Panc1 (cell line): ENCODE measurements at regions of chr1 and their contacts with region 1.

Region 1: GRCh38 chr1:152654110-152654509 is 9.1 kb upstream of the LCE2D start:
- DNase-seq: peak; percentile 35
- ATAC-seq: peak; percentile 93
- H3K4me3 ChIP-seq: no peak overlapping the region
- H3K27ac ChIP-seq: no peak overlapping the region
- H3K4me1 ChIP-seq: no peaks in the 10 kb centered on the region
- H3K27me3 ChIP-seq: peaks cover 5% of the 10 kb centered on the region
- CTCF ChIP-seq: peak; percentile 92

Region 2: GRCh38 chr1:152718238-152718637 is 64.1 kb after region 1 on chr1:
- CTCF ChIA-PET with region 1: no interaction called
- POLR2A ChIA-PET with region 1: no interaction called
- in situ Hi-C with region 1: no loop called
- intact Hi-C with region 1: no loop called
- DNase-seq: no peak
- ATAC-seq: no peak
- H3K4me3 ChIP-seq: no peak overlapping the region
- H3K27ac ChIP-seq: no peak overlapping the region
- H3K4me1 ChIP-seq: no peaks in the 10 kb centered on the region
- H3K27me3 ChIP-seq: no peaks in the 10 kb centered on the region; the same call in 1 of the 2 replicates
- CTCF ChIP-seq: no peak

Region 3: GRCh38 chr1:152878042-152878441 is 223.9 kb after region 1 on chr1 and contains the start of gene SMCP:
- CTCF ChIA-PET with region 1: no interaction called
- POLR2A ChIA-PET with region 1: no interaction called
- in situ Hi-C with region 1: no loop called
- intact Hi-C with region 1: no loop called
- DNase-seq: no peak
- ATAC-seq: no peak
- H3K4me3 ChIP-seq: no peak within 1 kb of the TSS
- H3K27ac ChIP-seq: no peak within 1 kb of the TSS
- H3K4me1 ChIP-seq: no peaks in the 10 kb centered on the region
- H3K27me3 ChIP-seq: no peaks in the 10 kb centered on the region
- CTCF ChIP-seq: peak; percentile 44; the same call in 1 of the 2 replicates
- total RNA-seq, gene SMCP: not detected

Region 4: GRCh38 chr1:153220606-153221303 is 566.6 kb after region 1 on chr1:
- CTCF ChIA-PET with region 1: interaction called, 5 read pairs
- POLR2A ChIA-PET with region 1: no interaction called
- in situ Hi-C with region 1: no loop called
- intact Hi-C with region 1: loop called (anchors 10 kb)
- DNase-seq: no peak
- ATAC-seq: no peak
- H3K4me3 ChIP-seq: no peak overlapping the region
- H3K27ac ChIP-seq: no peak overlapping the region
- H3K4me1 ChIP-seq: no peaks in the 10 kb centered on the region; the same call in 1 of the 2 replicates
- H3K27me3 ChIP-seq: peaks cover 5% of the 10 kb centered on the region
- CTCF ChIP-seq: no peak